Adrenal gland (tissue), 19 donors: ENCODE measurements at regions of chr19 and their contacts with region 1.

Region 1: GRCh38 chr19:36489118-36489919 is at the start of gene ZNF566:
- DNase-seq: peak; percentile 91 to 98 (median 94)
- H3K4me3 ChIP-seq: peak within 1 kb of the TSS; percentile 30 to 89 (median 76)
- H3K27ac ChIP-seq: peak within 1 kb of the TSS; percentile 83 to 98 (median 96)
- H3K4me1 ChIP-seq: peaks cover 0 to 10% of the 10 kb centered on the region in 2 donors
- H3K27me3 ChIP-seq: no peaks in the 10 kb centered on the region
- CTCF ChIP-seq: peak in 1 of 6 experiments; percentile 15
- POLR2A ChIP-seq: peak; percentile 19 to 77
- total RNA-seq, gene ZNF566: 7.4 to 20.9 (median 13.1) TPM

Region 2: DNA sequence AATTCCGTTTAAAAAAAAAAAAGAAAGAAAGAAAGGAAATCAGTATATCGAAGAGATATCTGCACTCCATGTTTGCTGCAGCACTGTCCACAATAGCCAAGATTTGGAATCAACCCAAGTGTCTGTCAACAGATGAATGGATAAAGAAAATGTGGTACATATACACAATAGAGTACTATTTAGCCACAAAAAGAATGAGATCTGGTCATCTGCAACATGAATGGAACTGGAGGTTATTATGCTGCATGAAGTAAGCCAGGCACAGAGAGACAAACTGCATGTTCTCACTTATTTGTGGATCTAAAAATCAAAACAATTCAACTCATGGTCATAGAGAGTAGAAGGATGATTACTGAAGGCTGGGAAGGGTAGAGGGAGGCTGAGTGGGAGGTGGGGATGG is 291.2 kb before region 1 on chr19:
- intact Hi-C with region 1: loop called (anchors 10 kb)
- DNase-seq: no peak
- H3K4me3 ChIP-seq: no peak overlapping the region
- H3K27ac ChIP-seq: no peak overlapping the region
- H3K4me1 ChIP-seq: no peaks in the 10 kb centered on the region
- H3K27me3 ChIP-seq: no peaks in the 10 kb centered on the region
- CTCF ChIP-seq: no peak
- POLR2A ChIP-seq: no peak

Region 3: GRCh38 chr19:36207605-36208252 is 281.6 kb before region 1 on chr19:
- intact Hi-C with region 1: loop called in 1 of 2 experiments (anchors 10 kb)
- DNase-seq: no peak
- H3K4me3 ChIP-seq: no peak overlapping the region
- H3K27ac ChIP-seq: no peak overlapping the region
- H3K4me1 ChIP-seq: no peaks in the 10 kb centered on the region
- H3K27me3 ChIP-seq: no peaks in the 10 kb centered on the region
- CTCF ChIP-seq: no peak
- POLR2A ChIP-seq: no peak

Region 4: DNA sequence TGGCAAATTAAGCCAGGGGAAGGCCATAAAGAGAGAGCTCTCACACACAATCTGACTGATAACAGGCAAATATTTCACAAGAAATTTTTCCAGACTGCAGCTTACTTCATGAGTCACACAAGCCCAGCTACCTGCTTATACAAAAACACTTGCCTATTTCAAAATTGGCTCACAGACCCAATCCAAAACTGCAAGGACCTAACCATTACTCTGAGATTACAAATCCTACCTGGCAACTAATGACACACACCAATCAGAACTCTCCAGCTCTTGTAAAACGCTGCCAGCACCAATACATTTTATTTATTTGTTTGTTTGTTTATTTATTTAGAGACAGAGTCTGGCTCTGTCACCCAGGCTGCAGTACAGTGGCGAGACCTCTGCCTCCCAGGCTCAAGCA is 52.8 kb before region 1 on chr19:
- intact Hi-C with region 1: no loop called
- DNase-seq: peak in 2 of 7 donors; percentile 10 to 19
- H3K4me3 ChIP-seq: no peak overlapping the region
- H3K27ac ChIP-seq: no peak overlapping the region
- H3K4me1 ChIP-seq: no peaks in the 10 kb centered on the region
- H3K27me3 ChIP-seq: no peaks in the 10 kb centered on the region
- CTCF ChIP-seq: no peak
- POLR2A ChIP-seq: no peak